GM23248 (cell line): ENCODE measurements at regions of chr2 and their contacts with region 1.

Region 1: GRCh38 chr2:44479122-44479887 is 117.6 kb downstream of the CAMKMT start:
- DNase-seq: peak; percentile 88
- H3K4me3 ChIP-seq: no peak overlapping the region
- H3K27ac ChIP-seq: no peak overlapping the region
- H3K4me1 ChIP-seq: no peaks in the 10 kb centered on the region
- H3K27me3 ChIP-seq: no peaks in the 10 kb centered on the region

Region 2: DNA sequence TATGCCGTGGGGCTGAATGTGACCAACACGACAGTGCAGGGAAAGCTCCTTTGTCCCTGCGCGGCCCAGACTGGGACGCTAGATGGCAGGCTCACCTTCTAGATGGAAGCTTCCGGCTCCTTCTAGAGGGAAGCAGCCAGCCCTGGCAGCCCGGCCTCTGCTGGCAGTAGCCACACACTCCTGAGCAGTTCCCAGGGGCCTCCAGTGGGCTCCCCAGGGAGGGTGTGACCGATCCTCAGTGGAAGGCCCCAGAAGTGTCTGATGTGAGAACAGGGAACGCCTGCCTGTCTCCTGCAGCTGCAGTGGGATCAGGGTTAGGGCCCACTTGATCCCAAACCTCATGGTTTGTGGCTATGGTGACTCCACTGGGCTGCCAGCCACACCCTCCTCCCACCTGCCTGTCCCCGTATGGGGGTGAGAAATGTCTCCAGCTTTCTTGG is 435.0 kb before region 1 on chr2:
- in situ Hi-C with region 1: loop called (anchors 10 kb)
- DNase-seq: peak; percentile 94
- H3K4me3 ChIP-seq: no peak overlapping the region
- H3K27ac ChIP-seq: no peak overlapping the region
- H3K4me1 ChIP-seq: no peaks in the 10 kb centered on the region
- H3K27me3 ChIP-seq: peaks cover 13% of the 10 kb centered on the region; the same call in 1 of the 2 replicates

Region 3: GRCh38 chr2:44578421-44579135 is 99.3 kb after region 1 on chr2:
- in situ Hi-C with region 1: no loop called
- DNase-seq: peak; percentile 73
- H3K4me3 ChIP-seq: peak overlapping the region; percentile 38
- H3K27ac ChIP-seq: peak overlapping the region; percentile 29
- H3K4me1 ChIP-seq: peaks cover 42% of the 10 kb centered on the region
- H3K27me3 ChIP-seq: no peaks in the 10 kb centered on the region

Region 4: GRCh38 chr2:44715671-44716081 is 236.4 kb after region 1 on chr2:
- in situ Hi-C with region 1: loop called (anchors 25 kb)
- DNase-seq: peak; percentile 82
- H3K4me3 ChIP-seq: peak overlapping the region; percentile 13; the same call in 1 of the 2 replicates
- H3K27ac ChIP-seq: peak overlapping the region; percentile 53
- H3K4me1 ChIP-seq: peaks cover 15% of the 10 kb centered on the region
- H3K27me3 ChIP-seq: 0 out of 2 replicates have a peak, but pooled peaks cover 4% of the 10 kb centered on the region

Region 5: GRCh38 chr2:44955593-44956392 is 476.5 kb after region 1 on chr2:
- in situ Hi-C with region 1: loop called (anchors 10 kb)
- DNase-seq: peak; percentile 87
- H3K4me3 ChIP-seq: peak overlapping the region; percentile 57
- H3K27ac ChIP-seq: no peak overlapping the region
- H3K4me1 ChIP-seq: peaks cover 20% of the 10 kb centered on the region
- H3K27me3 ChIP-seq: peaks cover 42% of the 10 kb centered on the region